ENCODE measurements at regions of chr10 and their contacts with region 1.

Region 1: DNA sequence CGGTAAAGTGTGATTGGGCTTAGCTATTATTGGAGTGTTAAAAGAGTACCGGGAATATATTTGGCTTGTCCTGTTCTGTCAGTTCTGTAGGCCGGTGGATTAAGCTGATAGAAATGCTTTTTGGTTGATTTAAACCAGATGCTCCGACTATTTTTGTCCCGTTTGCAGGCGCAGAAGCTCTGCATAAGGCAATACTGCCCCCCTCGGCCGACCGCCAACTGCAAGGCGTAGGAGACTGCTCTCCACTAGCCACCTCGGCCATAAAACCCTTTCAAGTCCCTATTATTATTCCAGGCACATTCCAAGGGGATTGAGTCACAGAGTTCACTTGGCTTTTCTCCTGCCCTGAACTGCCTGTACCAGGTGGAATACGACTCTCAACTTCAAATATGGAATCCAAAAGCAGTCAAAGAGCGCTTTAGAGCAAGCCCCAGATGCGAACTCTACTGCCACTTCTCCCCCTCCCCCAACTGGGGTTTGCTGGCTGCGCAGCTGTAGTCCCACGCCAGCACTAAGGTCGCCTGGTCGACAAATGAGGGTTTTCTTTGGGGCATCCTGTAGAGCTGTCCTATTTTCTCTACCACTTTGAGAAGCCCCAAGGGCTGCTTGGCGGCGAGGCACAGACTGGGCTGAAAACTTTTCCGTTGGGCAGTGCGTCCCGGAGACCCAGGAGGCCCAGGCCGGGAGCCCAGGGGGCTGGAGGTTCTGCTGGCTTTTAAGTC is 108.3 kb downstream of the REEP3 start:
- DNase-seq: peak; percentile 88
- ATAC-seq: peak; percentile 66
- H3K4me3 Mint-ChIP-seq: peak overlapping the region; percentile 86
- H3K27ac Mint-ChIP-seq: peak overlapping the region; percentile 89
- H3K4me1 Mint-ChIP-seq: peaks cover 46% of the 10 kb centered on the region
- H3K27me3 Mint-ChIP-seq: peaks cover 9% of the 10 kb centered on the region

Region 2: GRCh38 chr10:63157845-63158624 is 471.5 kb before region 1 on chr10:
- CTCF ChIA-PET with region 1: interaction called, 14 read pairs
- POLR2A ChIA-PET with region 1: interaction called, 4 read pairs
- DNase-seq: peak; percentile 67
- ATAC-seq: peak; percentile 78
- H3K4me3 Mint-ChIP-seq: no peak overlapping the region
- H3K27ac Mint-ChIP-seq: no peak overlapping the region
- H3K4me1 Mint-ChIP-seq: peaks cover 10% of the 10 kb centered on the region
- H3K27me3 Mint-ChIP-seq: no peaks in the 10 kb centered on the region

Region 3: GRCh38 chr10:63173468-63174232 is 455.9 kb before region 1 on chr10:
- CTCF ChIA-PET with region 1: interaction called, 116 read pairs
- POLR2A ChIA-PET with region 1: interaction called, 6 read pairs
- DNase-seq: no peak
- ATAC-seq: peak; percentile 95
- H3K4me3 Mint-ChIP-seq: peak overlapping the region; percentile 43
- H3K27ac Mint-ChIP-seq: peak overlapping the region; percentile 88
- H3K4me1 Mint-ChIP-seq: peaks cover 77% of the 10 kb centered on the region
- H3K27me3 Mint-ChIP-seq: no peaks in the 10 kb centered on the region

Region 4: DNA sequence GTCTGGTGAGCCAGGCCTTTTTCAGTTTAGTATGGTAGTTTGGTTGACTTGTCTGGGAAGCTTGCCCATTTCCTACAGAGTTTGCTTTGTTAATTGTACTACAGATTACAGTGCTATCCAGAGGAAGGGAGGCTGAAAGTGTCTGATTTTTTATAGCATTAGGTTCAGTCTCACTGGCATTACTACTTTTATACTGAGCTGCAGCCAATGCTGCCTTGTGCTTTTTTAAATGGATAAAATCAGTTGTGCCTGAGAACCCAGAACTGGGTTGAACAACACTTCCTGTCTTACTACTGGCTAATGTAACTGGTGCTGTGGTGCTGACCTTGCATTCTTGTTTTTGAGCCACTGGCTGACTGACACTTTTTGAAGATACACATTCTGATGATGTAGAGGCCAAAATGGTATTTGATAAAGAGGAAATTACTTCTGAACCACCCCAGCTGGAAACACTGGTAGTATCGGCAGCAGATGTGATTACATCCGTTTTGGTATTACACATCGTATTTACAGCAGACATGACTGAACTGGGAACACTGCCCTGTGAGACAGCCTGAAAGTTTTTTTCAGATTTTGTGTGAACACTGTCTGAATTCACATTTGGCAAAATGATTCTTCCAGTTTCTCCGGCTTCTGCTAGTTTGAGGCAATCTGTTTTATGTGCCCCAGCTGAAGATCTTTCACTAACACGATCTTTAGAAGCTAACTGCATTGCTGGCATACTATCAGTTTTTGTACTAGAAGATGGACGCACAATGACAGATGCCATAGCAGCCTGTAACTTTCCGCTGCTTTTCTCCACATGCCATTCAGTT is 422.3 kb before region 1 on chr10:
- CTCF ChIA-PET with region 1: interaction called, 17 read pairs
- POLR2A ChIA-PET with region 1: no interaction called
- DNase-seq: no peak
- ATAC-seq: peak; percentile 48
- H3K4me3 Mint-ChIP-seq: peak overlapping the region; percentile 38
- H3K27ac Mint-ChIP-seq: peak overlapping the region; percentile 75
- H3K4me1 Mint-ChIP-seq: peaks cover 65% of the 10 kb centered on the region
- H3K27me3 Mint-ChIP-seq: no peaks in the 10 kb centered on the region

Region 5: GRCh38 chr10:63227207-63227915 is 402.2 kb before region 1 on chr10:
- CTCF ChIA-PET with region 1: interaction called, 13 read pairs
- POLR2A ChIA-PET with region 1: no interaction called
- DNase-seq: no peak
- ATAC-seq: peak; percentile 49
- H3K4me3 Mint-ChIP-seq: peak overlapping the region; percentile 42
- H3K27ac Mint-ChIP-seq: peak overlapping the region; percentile 82
- H3K4me1 Mint-ChIP-seq: peaks cover 47% of the 10 kb centered on the region
- H3K27me3 Mint-ChIP-seq: no peaks in the 10 kb centered on the region

Region 6: GRCh38 chr10:63465293-63466143 is 164.0 kb before region 1 on chr10 and contains the start of gene JMJD1C:
- CTCF ChIA-PET with region 1: interaction called, 10 read pairs
- POLR2A ChIA-PET with region 1: no interaction called
- DNase-seq: peak; percentile 63
- ATAC-seq: peak; percentile 80
- H3K4me3 Mint-ChIP-seq: peak within 1 kb of the TSS; percentile 93
- H3K27ac Mint-ChIP-seq: peak within 1 kb of the TSS; percentile 87
- H3K4me1 Mint-ChIP-seq: peaks cover 17% of the 10 kb centered on the region
- H3K27me3 Mint-ChIP-seq: peaks cover 2% of the 10 kb centered on the region
- total RNA-seq, gene JMJD1C: 63.0 to 65.1 TPM

Region 7: GRCh38 chr10:63641799-63642198 is 12.3 kb after region 1 on chr10:
- CTCF ChIA-PET with region 1: interaction called, 11 read pairs
- POLR2A ChIA-PET with region 1: interaction called, 3 read pairs
- DNase-seq: no peak
- ATAC-seq: no peak
- H3K4me3 Mint-ChIP-seq: no peak overlapping the region
- H3K27ac Mint-ChIP-seq: no peak overlapping the region
- H3K4me1 Mint-ChIP-seq: no peaks in the 10 kb centered on the region
- H3K27me3 Mint-ChIP-seq: peaks cover 7% of the 10 kb centered on the region

Region 8: GRCh38 chr10:63788152-63788821 is 158.8 kb after region 1 on chr10:
- CTCF ChIA-PET with region 1: no interaction called
- POLR2A ChIA-PET with region 1: no interaction called
- DNase-seq: no peak
- ATAC-seq: no peak
- H3K4me3 Mint-ChIP-seq: no peak overlapping the region
- H3K27ac Mint-ChIP-seq: no peak overlapping the region
- H3K4me1 Mint-ChIP-seq: no peaks in the 10 kb centered on the region
- H3K27me3 Mint-ChIP-seq: peaks cover 13% of the 10 kb centered on the region